Activated CD8-positive, alpha-beta T cell treated with anti-CD3 and anti-CD28 coated beads for 36 hours (primary cell): ENCODE measurements at regions of chr9 and their contacts with region 1.

Region 1: GRCh38 chr9:32378993-32379729 is 5.3 kb upstream of the ACO1 start:
- DNase-seq: peak; percentile 46
- ATAC-seq: peak; percentile 87
- H3K4me3 Mint-ChIP-seq: peak overlapping the region; percentile 33
- H3K27ac Mint-ChIP-seq: no peak overlapping the region
- H3K4me1 Mint-ChIP-seq: peaks cover 14% of the 10 kb centered on the region
- H3K27me3 Mint-ChIP-seq: peaks cover 12% of the 10 kb centered on the region
- CTCF ChIP-seq: peak; percentile 68

Region 2: GRCh38 chr9:32180597-32180996 is 198.6 kb before region 1 on chr9:
- CTCF ChIA-PET with region 1: no interaction called
- POLR2A ChIA-PET with region 1: no interaction called
- intact Hi-C with region 1: no loop called
- DNase-seq: no peak
- ATAC-seq: no peak
- H3K4me3 Mint-ChIP-seq: no peak overlapping the region
- H3K27ac Mint-ChIP-seq: no peak overlapping the region
- H3K4me1 Mint-ChIP-seq: no peaks in the 10 kb centered on the region
- H3K27me3 Mint-ChIP-seq: no peaks in the 10 kb centered on the region
- CTCF ChIP-seq: no peak

Region 3: GRCh38 chr9:32426278-32426939 is 47.2 kb after region 1 on chr9:
- CTCF ChIA-PET with region 1: interaction called, 111 read pairs
- POLR2A ChIA-PET with region 1: no interaction called
- intact Hi-C with region 1: no loop called
- DNase-seq: no peak
- ATAC-seq: no peak
- H3K4me3 Mint-ChIP-seq: no peak overlapping the region
- H3K27ac Mint-ChIP-seq: no peak overlapping the region
- H3K4me1 Mint-ChIP-seq: peaks cover 2% of the 10 kb centered on the region
- H3K27me3 Mint-ChIP-seq: no peaks in the 10 kb centered on the region
- CTCF ChIP-seq: no peak

Region 4: GRCh38 chr9:32449969-32450368 is 70.8 kb after region 1 on chr9:
- CTCF ChIA-PET with region 1: interaction called, 27 read pairs
- POLR2A ChIA-PET with region 1: no interaction called
- intact Hi-C with region 1: no loop called
- DNase-seq: no peak
- ATAC-seq: no peak
- H3K4me3 Mint-ChIP-seq: no peak overlapping the region
- H3K27ac Mint-ChIP-seq: no peak overlapping the region
- H3K4me1 Mint-ChIP-seq: no peaks in the 10 kb centered on the region
- H3K27me3 Mint-ChIP-seq: no peaks in the 10 kb centered on the region
- CTCF ChIP-seq: no peak

Region 5: GRCh38 chr9:32543047-32543446 is 163.9 kb after region 1 on chr9:
- CTCF ChIA-PET with region 1: interaction called, 18 read pairs
- POLR2A ChIA-PET with region 1: no interaction called
- intact Hi-C with region 1: no loop called
- DNase-seq: no peak
- ATAC-seq: no peak
- H3K4me3 Mint-ChIP-seq: no peak overlapping the region
- H3K27ac Mint-ChIP-seq: no peak overlapping the region
- H3K4me1 Mint-ChIP-seq: peaks cover 14% of the 10 kb centered on the region
- H3K27me3 Mint-ChIP-seq: no peaks in the 10 kb centered on the region
- CTCF ChIP-seq: no peak

Region 6: DNA sequence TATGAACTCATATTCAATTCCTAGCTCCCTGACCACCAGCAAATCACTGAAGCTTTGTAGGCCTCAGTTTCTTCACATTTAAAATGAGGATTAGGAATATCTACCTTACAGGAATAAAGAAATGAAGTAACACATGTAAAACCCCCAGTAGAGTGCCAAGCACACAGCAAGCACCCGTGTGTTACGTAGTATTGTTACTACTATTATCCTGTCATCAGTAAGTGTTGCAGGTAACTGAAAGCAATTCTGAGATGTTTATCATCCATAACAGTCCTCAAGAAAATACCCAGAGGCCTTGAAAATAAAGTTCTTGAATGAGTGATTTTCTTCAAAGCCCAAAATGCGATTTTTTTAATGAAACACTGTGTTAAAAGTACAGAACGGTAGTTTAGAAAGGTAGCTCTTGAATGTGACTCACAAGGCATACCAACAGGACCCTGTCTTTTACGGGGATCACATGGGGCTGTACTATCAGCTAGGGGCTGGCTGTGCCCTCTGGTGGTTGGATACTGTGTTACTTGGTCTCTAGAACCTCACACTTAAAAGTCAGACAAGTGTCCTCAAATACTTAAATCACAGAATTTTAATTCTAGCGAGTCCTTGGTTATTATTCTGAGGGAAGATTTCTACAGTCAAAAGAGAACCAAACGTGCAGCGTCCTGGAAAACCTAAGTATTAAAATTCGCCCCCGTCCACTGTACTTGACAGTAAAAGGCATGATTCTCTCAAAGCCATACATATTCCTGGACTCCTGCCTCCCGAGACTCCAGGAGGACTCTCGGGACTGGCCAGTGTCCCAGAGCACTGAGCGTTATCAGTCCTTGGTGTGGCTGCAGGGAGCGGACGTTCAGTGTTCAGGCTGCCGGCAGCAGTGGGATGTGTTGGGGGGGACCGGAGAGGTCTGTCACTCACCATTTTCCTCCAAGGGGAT is 193.1 kb after region 1 on chr9:
- CTCF ChIA-PET with region 1: interaction called, 477 read pairs
- POLR2A ChIA-PET with region 1: interaction called, 3 read pairs
- intact Hi-C with region 1: no loop called
- DNase-seq: peak; percentile 89
- ATAC-seq: peak; percentile 90
- H3K4me3 Mint-ChIP-seq: peak overlapping the region; percentile 96
- H3K27ac Mint-ChIP-seq: peak overlapping the region; percentile 94
- H3K4me1 Mint-ChIP-seq: peaks cover 29% of the 10 kb centered on the region
- H3K27me3 Mint-ChIP-seq: no peaks in the 10 kb centered on the region
- CTCF ChIP-seq: peak; percentile 83

Region 7: GRCh38 chr9:32968101-32969011 is 589.2 kb after region 1 on chr9:
- CTCF ChIA-PET with region 1: interaction called, 46 read pairs
- POLR2A ChIA-PET with region 1: no interaction called
- intact Hi-C with region 1: loop called (anchors 5 kb)
- DNase-seq: peak; percentile 75
- ATAC-seq: no peak
- H3K4me3 Mint-ChIP-seq: no peak overlapping the region
- H3K27ac Mint-ChIP-seq: no peak overlapping the region
- H3K4me1 Mint-ChIP-seq: peaks cover 1% of the 10 kb centered on the region
- H3K27me3 Mint-ChIP-seq: no peaks in the 10 kb centered on the region
- CTCF ChIP-seq: peak; percentile 84